Transverse colon (tissue), 4 donors: ENCODE measurements at regions of chr7 and their contacts with region 1.

Region 1: GRCh38 chr7:133571076-133571475 is 318.2 kb downstream of the EXOC4 start:
- DNase-seq: no peak
- H3K4me3 ChIP-seq: no peak overlapping the region
- H3K27ac ChIP-seq: no peak overlapping the region
- H3K4me1 ChIP-seq: no peaks in the 10 kb centered on the region
- H3K27me3 ChIP-seq: no peaks in the 10 kb centered on the region
- CTCF ChIP-seq: no peak
- EP300 ChIP-seq: no peak
- POLR2A ChIP-seq: no peak

Region 2: DNA sequence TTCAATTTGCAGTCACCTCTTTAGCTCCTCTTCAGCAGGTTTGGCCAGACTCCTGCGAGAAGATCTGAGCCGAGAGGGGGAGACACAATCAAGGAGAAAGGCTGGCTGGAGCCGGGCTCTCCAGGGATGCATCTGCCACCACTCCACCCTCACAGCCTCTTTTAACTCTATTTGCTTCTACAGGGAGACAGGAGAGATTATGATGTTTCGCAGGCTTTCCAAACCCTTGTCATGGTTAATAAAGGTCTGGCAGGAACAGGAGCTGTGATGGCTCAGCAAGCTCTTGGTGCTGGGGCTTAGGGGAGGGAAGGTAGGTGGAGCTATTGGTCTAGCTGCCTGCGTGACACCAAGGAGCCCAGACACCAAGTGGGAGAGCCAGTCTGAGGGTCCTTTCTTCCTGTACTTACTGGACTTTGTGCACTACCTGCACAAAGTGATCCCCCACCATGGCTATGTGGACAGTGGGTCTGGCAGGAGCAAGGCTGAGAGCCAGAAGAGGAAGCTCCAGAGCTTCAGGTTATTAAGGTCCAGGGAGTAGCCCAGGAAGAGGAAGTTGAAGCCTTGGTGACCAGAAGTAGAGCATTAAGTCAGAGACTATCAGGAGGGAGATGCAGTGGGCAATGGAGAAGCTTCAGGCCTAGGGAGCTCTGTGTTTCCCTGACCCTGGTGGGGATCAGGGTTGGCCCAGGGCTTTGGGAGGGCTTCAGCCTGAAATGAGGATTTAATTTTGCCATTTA is 1566.4 kb before region 1 on chr7:
- in situ Hi-C with region 1: no loop called
- intact Hi-C with region 1: loop called (anchors 5 kb)
- DNase-seq: no peak
- H3K4me3 ChIP-seq: no peak overlapping the region
- H3K27ac ChIP-seq: no peak overlapping the region
- H3K4me1 ChIP-seq: no peaks in the 10 kb centered on the region
- H3K27me3 ChIP-seq: no peaks in the 10 kb centered on the region
- CTCF ChIP-seq: no peak
- EP300 ChIP-seq: no peak
- POLR2A ChIP-seq: no peak

Region 3: GRCh38 chr7:133275008-133275407 is 296.1 kb before region 1 on chr7:
- in situ Hi-C with region 1: no loop called
- intact Hi-C with region 1: no loop called
- DNase-seq: no peak
- H3K4me3 ChIP-seq: no peak overlapping the region
- H3K27ac ChIP-seq: no peak overlapping the region
- H3K4me1 ChIP-seq: peaks cover 0 to 7% (median 3%) of the 10 kb centered on the region in 4 donors
- H3K27me3 ChIP-seq: no peaks in the 10 kb centered on the region
- CTCF ChIP-seq: no peak
- EP300 ChIP-seq: no peak
- POLR2A ChIP-seq: no peak

Region 4: GRCh38 chr7:133412942-133413341 is 158.1 kb before region 1 on chr7:
- in situ Hi-C with region 1: no loop called
- intact Hi-C with region 1: no loop called
- DNase-seq: no peak
- H3K4me3 ChIP-seq: no peak overlapping the region
- H3K27ac ChIP-seq: no peak overlapping the region
- H3K4me1 ChIP-seq: no peaks in the 10 kb centered on the region
- H3K27me3 ChIP-seq: no peaks in the 10 kb centered on the region
- CTCF ChIP-seq: no peak
- EP300 ChIP-seq: no peak
- POLR2A ChIP-seq: no peak